IMR-90 (cell line): ENCODE measurements at regions of chr3 and their contacts with region 1.

Region 1: GRCh38 chr3:171654809-171655208 is 155.5 kb downstream of the PLD1 start:
- DNase-seq: peak; percentile 31
- ATAC-seq: peak; percentile 71; the same call in 1 of the 2 replicates
- H3K4me3 ChIP-seq: no peak overlapping the region
- H3K27ac ChIP-seq: no peak overlapping the region
- H3K4me1 ChIP-seq: no peaks in the 10 kb centered on the region
- H3K27me3 ChIP-seq: no peaks in the 10 kb centered on the region
- CTCF ChIP-seq: no peak
- POLR2A ChIP-seq: no peak
- RAD21 ChIP-seq: no peak

Region 2: DNA sequence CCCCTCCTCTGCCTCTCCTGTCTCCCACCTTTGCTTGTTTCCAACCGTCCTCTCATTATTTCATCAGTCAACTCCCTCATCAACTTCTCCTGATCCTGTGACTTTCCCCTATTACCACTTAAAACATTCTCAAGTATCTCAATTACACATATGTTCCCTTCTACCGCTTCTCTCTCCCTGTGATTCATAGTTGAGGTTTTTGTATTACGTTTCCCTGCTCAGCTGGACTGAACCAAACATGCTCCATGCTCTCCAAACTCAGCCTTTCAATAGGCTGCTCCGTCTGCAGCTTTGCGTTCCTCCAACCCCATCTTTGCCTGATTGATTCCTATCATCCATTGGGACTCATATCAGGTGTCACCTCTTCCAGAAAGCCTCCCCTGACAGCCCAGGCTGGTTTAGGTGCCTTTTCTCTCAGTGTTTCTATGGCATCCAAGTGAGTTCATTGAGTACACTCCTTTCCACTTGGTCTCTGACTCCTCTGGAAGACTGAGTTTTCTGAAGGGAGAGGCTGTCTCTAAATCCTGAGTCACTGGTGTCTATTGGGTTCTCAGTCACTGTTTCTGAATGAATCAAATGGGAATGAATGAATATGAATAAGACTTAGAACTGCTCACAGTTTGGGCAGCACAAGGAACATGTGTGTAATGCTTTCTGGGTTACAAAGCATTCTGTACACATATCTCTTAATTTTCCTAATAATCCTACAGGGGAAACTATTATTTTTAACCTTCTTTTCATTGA is 99.0 kb after region 1 on chr3:
- CTCF ChIA-PET with region 1: no interaction called
- POLR2A ChIA-PET with region 1: no interaction called
- dilution Hi-C with region 1: no loop called
- in situ Hi-C with region 1: no loop called
- intact Hi-C with region 1: loop called (anchors 5 kb)
- DNase-seq: peak; percentile 86
- ATAC-seq: peak; percentile 78
- H3K4me3 ChIP-seq: no peak overlapping the region
- H3K27ac ChIP-seq: no peak overlapping the region
- H3K4me1 ChIP-seq: peaks cover 2% of the 10 kb centered on the region; the same call in 1 of the 2 replicates
- H3K27me3 ChIP-seq: no peaks in the 10 kb centered on the region
- CTCF ChIP-seq: no peak
- POLR2A ChIP-seq: no peak
- RAD21 ChIP-seq: no peak

Region 3: DNA sequence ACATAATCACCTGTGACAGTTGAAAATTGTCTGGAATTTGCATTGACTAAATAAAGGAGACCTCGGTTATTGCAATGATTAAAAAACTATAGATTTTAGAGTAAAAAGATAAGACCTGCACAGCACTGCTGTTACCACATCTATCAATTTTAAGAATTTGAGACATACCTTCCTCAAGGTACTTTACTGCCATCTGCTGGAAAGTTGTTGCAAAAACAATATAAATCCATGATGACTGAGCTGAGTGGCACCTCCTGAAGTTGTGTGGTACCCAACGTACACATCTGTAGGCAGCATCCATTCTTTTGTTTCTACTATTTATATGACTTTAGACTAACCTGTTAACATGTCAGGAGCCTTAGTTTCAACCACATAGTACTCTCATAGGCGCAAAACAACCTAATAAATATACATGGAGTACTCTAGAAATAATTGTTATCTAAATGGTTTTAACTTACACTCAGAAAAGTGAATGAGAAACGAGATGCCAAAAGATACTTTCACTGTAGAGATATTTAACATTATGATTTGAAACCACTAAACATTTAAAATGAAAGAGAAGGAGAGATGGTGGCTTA is 686.8 kb after region 1 on chr3:
- CTCF ChIA-PET with region 1: no interaction called
- POLR2A ChIA-PET with region 1: no interaction called
- dilution Hi-C with region 1: no loop called
- in situ Hi-C with region 1: no loop called
- intact Hi-C with region 1: loop called (anchors 5 kb)
- DNase-seq: peak; percentile 70
- ATAC-seq: peak; percentile 72
- H3K4me3 ChIP-seq: no peak overlapping the region
- H3K27ac ChIP-seq: no peak overlapping the region
- H3K4me1 ChIP-seq: no peaks in the 10 kb centered on the region; the same call in 1 of the 2 replicates
- H3K27me3 ChIP-seq: no peaks in the 10 kb centered on the region
- CTCF ChIP-seq: peak; percentile 58
- POLR2A ChIP-seq: no peak
- RAD21 ChIP-seq: peak; percentile 62